Heart right ventricle (tissue), 16 donors: ENCODE measurements at regions of chr22 and their contacts with region 1.

Region 1: DNA sequence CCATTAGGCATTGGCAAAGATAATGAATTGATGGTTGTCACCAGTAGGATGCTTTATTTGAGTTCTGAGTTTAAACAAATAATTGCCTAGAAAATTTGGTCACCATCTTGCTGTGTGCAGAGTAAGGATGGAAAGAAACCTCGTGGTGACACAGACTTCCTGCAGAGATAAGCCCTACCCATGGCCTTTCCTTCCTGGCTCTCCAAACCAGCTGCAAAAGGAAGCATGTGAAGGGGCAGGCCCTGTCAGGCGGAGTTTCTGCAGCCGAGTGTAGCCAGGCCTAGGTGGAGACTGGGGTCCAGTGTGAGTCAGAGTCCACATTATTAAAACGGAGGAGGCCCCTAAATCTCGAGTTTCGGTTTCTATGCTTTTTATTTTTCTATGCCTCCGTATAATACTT is 83.1 kb upstream of the ADSL start:
- DNase-seq: peak in 1 of 2 donors; percentile 45
- ATAC-seq: peak in 7 of 8 donors; percentile 51 to 84 (median 76)
- H3K4me3 ChIP-seq: no peak overlapping the region
- H3K27ac ChIP-seq: peak overlapping the region in 4 of 10 donors; percentile 26 to 59 (median 50)
- H3K4me1 ChIP-seq: peaks cover 0 to 57% (median 24%) of the 10 kb centered on the region in 9 donors
- H3K27me3 ChIP-seq: no peaks in the 10 kb centered on the region
- CTCF ChIP-seq: no peak

Region 2: DNA sequence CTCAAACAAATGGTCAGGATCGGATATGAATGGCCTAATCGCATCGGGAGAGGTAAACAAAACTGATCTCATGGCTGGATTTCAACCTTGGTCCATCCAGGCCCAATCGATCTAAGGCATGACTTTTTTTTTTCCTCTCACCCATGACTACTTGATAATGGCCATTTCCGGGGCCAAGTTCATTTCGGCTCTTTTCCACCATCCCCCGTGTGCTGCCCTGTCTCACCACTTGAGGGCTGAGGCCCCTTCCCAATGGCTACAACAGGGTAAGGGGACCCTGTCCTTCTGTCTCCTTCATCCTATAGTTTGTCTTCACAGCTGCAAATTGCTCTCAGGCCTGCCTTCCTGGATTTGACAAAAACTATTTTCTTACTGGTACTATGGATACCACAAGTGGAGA is 335.6 kb before region 1 on chr22:
- intact Hi-C with region 1: no loop called
- DNase-seq: no peak
- ATAC-seq: no peak
- H3K4me3 ChIP-seq: no peak overlapping the region
- H3K27ac ChIP-seq: no peak overlapping the region
- H3K4me1 ChIP-seq: peaks cover 0 to 40% (median 0%) of the 10 kb centered on the region in 9 donors
- H3K27me3 ChIP-seq: peaks cover 0 to 88% (median 62%) of the 10 kb centered on the region in 7 donors
- CTCF ChIP-seq: no peak

Region 3: GRCh38 chr22:40238425-40239344 is 24.5 kb before region 1 on chr22:
- intact Hi-C with region 1: loop called in 1 of 10 experiments (anchors 2 kb)
- DNase-seq: no peak
- ATAC-seq: peak in 7 of 8 donors; percentile 41 to 82 (median 60)
- H3K4me3 ChIP-seq: peak overlapping the region in 1 of 10 donors; percentile 7
- H3K27ac ChIP-seq: peak overlapping the region in 8 of 10 donors; percentile 2 to 73 (median 35)
- H3K4me1 ChIP-seq: peaks cover 17 to 88% (median 74%) of the 10 kb centered on the region in 9 donors
- H3K27me3 ChIP-seq: no peaks in the 10 kb centered on the region
- CTCF ChIP-seq: no peak